MCF 10A (cell line): ENCODE measurements at regions of chr14 and their contacts with region 1.

Region 1: GRCh38 chr14:22852940-22853767 is 16.8 kb downstream of the MMP14 start:
- DNase-seq: peak; percentile 81
- H3K4me3 Mint-ChIP-seq: peak overlapping the region; percentile 70
- H3K27ac Mint-ChIP-seq: peak overlapping the region; percentile 64
- H3K4me1 Mint-ChIP-seq: peaks cover 25% of the 10 kb centered on the region
- H3K27me3 Mint-ChIP-seq: no peaks in the 10 kb centered on the region
- CTCF ChIP-seq: peak; percentile 85

Region 2: DNA sequence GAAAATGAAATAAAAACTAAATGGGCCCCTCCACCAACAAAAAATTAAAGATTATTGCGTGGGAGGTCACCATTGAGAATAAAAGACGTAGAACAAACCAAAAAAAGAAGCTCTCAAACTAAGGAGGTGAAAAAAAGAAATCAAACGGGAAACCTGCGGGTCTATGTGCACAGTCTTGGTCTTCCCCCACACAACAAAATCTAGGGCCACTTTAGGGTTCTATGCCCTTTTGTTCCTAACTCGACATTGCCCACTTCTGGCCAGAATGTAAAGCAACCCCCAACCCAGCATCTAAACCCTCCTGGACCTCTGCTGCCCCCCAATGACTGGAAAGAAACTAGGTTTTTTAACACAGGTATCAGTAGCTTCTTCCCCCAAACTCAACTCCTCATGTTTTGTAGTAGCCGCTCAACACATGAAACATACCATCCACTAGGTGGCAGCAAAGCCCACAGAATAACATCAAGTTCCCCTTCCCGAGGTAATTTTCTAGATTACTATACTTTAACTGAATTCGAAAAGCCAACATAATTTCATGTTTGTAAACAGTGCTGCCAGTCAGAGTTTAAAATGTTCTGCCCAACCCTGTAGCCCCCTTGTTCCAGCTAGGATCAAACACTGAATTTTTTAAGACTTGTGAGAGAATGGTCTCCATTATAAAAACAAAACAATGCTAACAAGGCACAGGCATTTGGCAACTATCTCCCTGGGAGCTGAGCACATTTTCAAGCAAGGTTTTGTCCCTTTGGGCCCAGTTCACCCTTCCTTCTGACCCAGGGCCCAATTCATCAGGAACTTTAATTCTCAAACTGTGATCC is 282.8 kb before region 1 on chr14:
- CTCF ChIA-PET with region 1: interaction called, 52 read pairs
- POLR2A ChIA-PET with region 1: interaction called, 3 read pairs
- intact Hi-C with region 1: loop called (anchors 2 kb)
- DNase-seq: peak; percentile 89
- H3K4me3 Mint-ChIP-seq: no peak overlapping the region
- H3K27ac Mint-ChIP-seq: peak overlapping the region; percentile 12
- H3K4me1 Mint-ChIP-seq: peaks cover 8% of the 10 kb centered on the region
- H3K27me3 Mint-ChIP-seq: no peaks in the 10 kb centered on the region
- CTCF ChIP-seq: peak; percentile 68

Region 3: GRCh38 chr14:22766456-22767322 is 86.5 kb before region 1 on chr14 and contains the start of gene OXA1L:
- CTCF ChIA-PET with region 1: interaction called, 17 read pairs
- POLR2A ChIA-PET with region 1: interaction called, 6 read pairs
- intact Hi-C with region 1: no loop called
- DNase-seq: peak; percentile 99
- H3K4me3 Mint-ChIP-seq: peak within 1 kb of the TSS; percentile 91
- H3K27ac Mint-ChIP-seq: peak within 1 kb of the TSS; percentile 99
- H3K4me1 Mint-ChIP-seq: peaks cover 21% of the 10 kb centered on the region
- H3K27me3 Mint-ChIP-seq: no peaks in the 10 kb centered on the region
- CTCF ChIP-seq: no peak
- total RNA-seq, gene OXA1L: 100 and 103 TPM in 2 replicates

Region 4: DNA sequence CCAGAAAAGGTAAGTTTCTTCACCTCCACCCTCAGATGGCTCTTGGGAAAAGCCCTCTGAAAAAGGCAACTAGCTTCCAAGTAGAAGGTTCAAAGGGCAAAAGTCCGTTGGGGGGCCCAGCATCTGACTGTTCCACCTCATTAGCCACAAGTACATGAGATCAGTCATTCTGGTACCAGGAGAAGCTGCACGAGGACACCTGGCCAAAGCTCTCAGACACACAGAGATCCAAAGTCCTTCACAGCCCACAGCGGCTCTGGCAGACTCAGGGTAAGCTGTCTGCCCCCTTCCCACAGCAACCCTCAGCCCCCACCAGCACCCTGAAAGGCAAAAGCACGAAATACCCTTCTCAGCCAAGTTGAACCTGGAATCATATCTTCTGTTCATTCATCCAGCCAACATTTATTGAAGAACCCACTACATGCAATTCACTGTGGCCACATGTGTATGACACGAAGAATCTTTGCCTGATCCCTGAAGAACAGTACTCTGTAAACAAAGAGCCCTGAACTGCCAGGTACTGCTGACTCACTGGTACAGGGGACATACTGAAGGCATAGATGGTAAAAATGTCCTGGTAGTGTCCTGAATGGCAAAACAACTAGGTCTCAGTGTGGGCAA is 57.0 kb before region 1 on chr14:
- CTCF ChIA-PET with region 1: interaction called, 10 read pairs
- POLR2A ChIA-PET with region 1: no interaction called
- intact Hi-C with region 1: no loop called
- DNase-seq: no peak
- H3K4me3 Mint-ChIP-seq: no peak overlapping the region
- H3K27ac Mint-ChIP-seq: no peak overlapping the region
- H3K4me1 Mint-ChIP-seq: peaks cover 6% of the 10 kb centered on the region
- H3K27me3 Mint-ChIP-seq: peaks cover 25% of the 10 kb centered on the region
- CTCF ChIP-seq: no peak

Region 5: GRCh38 chr14:22836301-22837113 is 16.6 kb before region 1 on chr14 and contains the start of gene MMP14:
- CTCF ChIA-PET with region 1: interaction called, 330 read pairs
- POLR2A ChIA-PET with region 1: interaction called, 142 read pairs
- intact Hi-C with region 1: loop called (anchors 2 kb)
- DNase-seq: peak; percentile 78
- H3K4me3 Mint-ChIP-seq: peak within 1 kb of the TSS; percentile 99
- H3K27ac Mint-ChIP-seq: peak within 1 kb of the TSS; percentile 98
- H3K4me1 Mint-ChIP-seq: peaks cover 21% of the 10 kb centered on the region
- H3K27me3 Mint-ChIP-seq: no peaks in the 10 kb centered on the region
- CTCF ChIP-seq: no peak
- total RNA-seq, gene MMP14: 71.5 and 78.6 TPM in 2 replicates

Region 6: DNA sequence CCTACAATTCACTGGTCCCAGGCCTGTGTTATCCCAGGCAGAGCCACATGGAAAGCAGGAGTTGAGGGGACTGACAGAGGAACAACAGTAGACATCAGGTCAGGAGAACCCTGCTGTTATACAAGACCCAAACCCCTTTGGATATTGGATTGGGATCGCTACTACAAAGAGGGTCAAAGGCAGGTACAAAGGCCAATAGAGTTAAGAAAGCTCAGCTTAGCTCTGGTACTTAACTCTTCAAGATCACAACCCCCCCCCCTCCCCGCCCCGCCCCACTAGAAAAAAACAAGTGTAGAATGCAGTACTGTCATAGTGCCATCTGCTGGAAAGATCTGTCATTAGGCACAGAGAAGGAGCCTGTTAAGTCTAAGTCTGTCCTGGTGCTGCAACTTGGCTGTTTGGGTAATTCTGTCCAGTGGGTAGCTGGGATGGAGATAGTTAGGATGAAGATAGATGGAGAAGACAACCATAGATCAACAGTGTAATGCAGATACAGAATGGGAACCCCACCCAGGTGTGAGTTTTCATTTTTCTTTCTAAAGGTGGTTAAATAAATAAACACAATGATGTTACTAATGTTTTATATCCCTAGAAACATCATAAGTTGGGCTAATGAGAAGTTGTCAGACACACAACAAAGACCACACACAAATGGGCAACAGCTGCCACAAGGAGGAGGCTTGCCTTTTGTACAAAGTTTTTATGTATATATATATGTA is 47.1 kb after region 1 on chr14:
- CTCF ChIA-PET with region 1: interaction called, 47 read pairs
- POLR2A ChIA-PET with region 1: interaction called, 5 read pairs
- intact Hi-C with region 1: loop called (anchors 1 kb)
- DNase-seq: peak; percentile 74
- H3K4me3 Mint-ChIP-seq: no peak overlapping the region
- H3K27ac Mint-ChIP-seq: no peak overlapping the region
- H3K4me1 Mint-ChIP-seq: peaks cover 17% of the 10 kb centered on the region
- H3K27me3 Mint-ChIP-seq: no peaks in the 10 kb centered on the region
- CTCF ChIP-seq: peak; percentile 59

Region 7: GRCh38 chr14:23154964-23155587 is 301.9 kb after region 1 on chr14:
- CTCF ChIA-PET with region 1: no interaction called
- POLR2A ChIA-PET with region 1: no interaction called
- intact Hi-C with region 1: no loop called
- DNase-seq: peak; percentile 64
- H3K4me3 Mint-ChIP-seq: peak overlapping the region; percentile 52
- H3K27ac Mint-ChIP-seq: peak overlapping the region; percentile 49
- H3K4me1 Mint-ChIP-seq: peaks cover 37% of the 10 kb centered on the region
- H3K27me3 Mint-ChIP-seq: no peaks in the 10 kb centered on the region
- CTCF ChIP-seq: no peak